ENCODE measurements at regions of chr22 and their contacts with region 1.

Region 1: GRCh38 chr22:39520054-39520891 is at the start of gene ATF4:
- H3K4me3 Mint-ChIP-seq: peak within 1 kb of the TSS; percentile 94
- H3K27ac Mint-ChIP-seq: peak within 1 kb of the TSS; percentile 100
- H3K4me1 Mint-ChIP-seq: peaks cover 70% of the 10 kb centered on the region
- H3K27me3 Mint-ChIP-seq: no peaks in the 10 kb centered on the region

Region 2: DNA sequence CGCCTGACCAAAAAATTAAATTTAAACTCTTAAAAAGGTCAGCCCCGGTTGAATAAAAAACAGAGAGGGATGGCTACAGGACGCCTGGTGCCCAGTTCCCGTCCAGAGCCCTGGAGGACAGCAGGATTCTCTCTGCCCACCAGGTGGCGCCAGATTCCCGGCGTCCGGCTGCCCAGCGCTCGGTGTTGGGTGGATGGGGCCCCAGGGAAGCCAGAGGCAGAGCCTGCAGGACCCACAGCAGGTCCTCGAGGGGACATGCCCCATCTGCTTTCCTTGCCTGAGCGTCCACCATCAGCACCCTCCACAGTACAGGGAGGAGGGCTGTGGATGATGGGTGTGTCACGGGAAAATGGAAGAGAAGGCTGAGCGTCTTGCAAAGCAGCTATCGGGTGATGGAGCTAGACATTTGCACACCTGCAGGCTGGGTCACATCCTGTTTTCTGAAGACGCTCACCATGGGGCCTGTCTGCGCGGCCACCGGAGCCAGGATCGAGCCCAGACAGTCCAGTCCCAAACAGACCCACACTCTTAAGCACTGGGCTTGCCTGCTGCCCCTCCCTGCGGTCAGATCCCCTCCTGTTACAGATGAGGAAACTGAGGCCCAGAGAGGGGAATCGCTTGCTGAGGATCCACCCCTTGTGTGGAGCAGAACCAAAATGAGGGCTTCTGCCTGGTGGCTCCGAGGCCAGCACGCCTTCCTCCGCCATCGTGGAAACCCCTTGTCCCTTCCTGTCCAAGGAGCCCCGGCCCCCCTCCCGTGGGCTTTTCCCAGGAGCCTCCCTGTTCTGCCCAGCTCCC is 349.2 kb before region 1 on chr22:
- intact Hi-C with region 1: loop called (anchors 10 kb)
- H3K4me3 Mint-ChIP-seq: no peak overlapping the region
- H3K27ac Mint-ChIP-seq: peak overlapping the region; percentile 35
- H3K4me1 Mint-ChIP-seq: peaks cover 37% of the 10 kb centered on the region
- H3K27me3 Mint-ChIP-seq: peaks cover 58% of the 10 kb centered on the region

Region 3: GRCh38 chr22:39319270-39320022 is 200.8 kb before region 1 on chr22 and contains the start of gene RPL3:
- intact Hi-C with region 1: loop called (anchors 10 kb)
- H3K4me3 Mint-ChIP-seq: peak within 1 kb of the TSS; percentile 99
- H3K27ac Mint-ChIP-seq: peak within 1 kb of the TSS; percentile 100
- H3K4me1 Mint-ChIP-seq: peaks cover 53% of the 10 kb centered on the region
- H3K27me3 Mint-ChIP-seq: no peaks in the 10 kb centered on the region

Region 4: GRCh38 chr22:39343259-39344048 is 176.8 kb before region 1 on chr22:
- intact Hi-C with region 1: loop called (anchors 10 kb)
- H3K4me3 Mint-ChIP-seq: no peak overlapping the region
- H3K27ac Mint-ChIP-seq: no peak overlapping the region
- H3K4me1 Mint-ChIP-seq: peaks cover 8% of the 10 kb centered on the region
- H3K27me3 Mint-ChIP-seq: peaks cover 3% of the 10 kb centered on the region

Region 5: DNA sequence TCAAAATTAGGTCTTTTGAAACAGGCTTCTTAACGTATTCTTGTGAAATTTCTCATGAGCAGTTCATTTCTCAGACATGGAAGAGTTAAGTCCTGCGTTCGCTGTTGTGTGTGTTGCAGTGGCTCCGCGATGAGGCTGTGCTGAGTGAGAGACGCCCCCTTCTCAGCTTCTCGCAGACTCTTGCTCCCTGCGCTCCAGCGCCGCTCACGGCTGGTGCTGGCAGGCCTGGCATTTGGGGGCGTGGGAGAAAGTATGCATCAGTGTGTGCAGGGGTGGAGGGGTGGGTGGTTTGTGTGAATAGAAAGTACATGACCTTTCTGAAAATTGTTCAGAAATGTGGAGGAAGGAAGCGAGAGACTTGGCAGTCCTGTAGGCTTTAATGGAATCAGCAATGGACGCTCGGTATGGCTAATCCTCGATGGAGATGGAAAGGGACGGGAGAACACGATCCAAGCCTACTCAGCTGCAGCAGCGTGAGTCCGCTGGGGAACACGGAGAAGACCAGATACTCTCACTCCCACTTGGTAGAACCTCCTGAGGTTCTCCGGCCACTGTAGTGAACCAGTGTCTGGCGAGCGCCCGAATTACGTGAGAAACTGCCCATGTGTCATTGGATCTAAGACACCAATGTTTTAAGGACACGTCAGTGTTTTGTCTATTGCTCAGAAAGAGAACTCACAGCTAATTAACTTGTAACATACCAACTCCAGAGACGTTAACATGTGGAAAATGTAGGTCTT is 114.8 kb before region 1 on chr22:
- intact Hi-C with region 1: loop called (anchors 10 kb)
- H3K4me3 Mint-ChIP-seq: no peak overlapping the region
- H3K27ac Mint-ChIP-seq: no peak overlapping the region
- H3K4me1 Mint-ChIP-seq: peaks cover 67% of the 10 kb centered on the region
- H3K27me3 Mint-ChIP-seq: no peaks in the 10 kb centered on the region

Region 6: GRCh38 chr22:39502109-39502788 is 18.0 kb before region 1 on chr22 and contains the start of gene MIEF1:
- intact Hi-C with region 1: loop called (anchors 1 kb)
- H3K4me3 Mint-ChIP-seq: peak within 1 kb of the TSS; percentile 82
- H3K27ac Mint-ChIP-seq: peak within 1 kb of the TSS; percentile 89
- H3K4me1 Mint-ChIP-seq: peaks cover 51% of the 10 kb centered on the region
- H3K27me3 Mint-ChIP-seq: no peaks in the 10 kb centered on the region

Region 7: GRCh38 chr22:39859903-39860588 is 339.8 kb after region 1 on chr22:
- intact Hi-C with region 1: no loop called
- H3K4me3 Mint-ChIP-seq: no peak overlapping the region
- H3K27ac Mint-ChIP-seq: no peak overlapping the region
- H3K4me1 Mint-ChIP-seq: peaks cover 12% of the 10 kb centered on the region
- H3K27me3 Mint-ChIP-seq: peaks cover 42% of the 10 kb centered on the region

Measured in dendritic cell treated with granulocyte-macrophage colony-stimulating factor and Interleukin-4, amounts not matched to agents 40 ng/mL and 50 ng/mL, for 4 days (primary cell).